ENCODE measurements at regions of chr3 and their contacts with region 1.

Region 1: DNA sequence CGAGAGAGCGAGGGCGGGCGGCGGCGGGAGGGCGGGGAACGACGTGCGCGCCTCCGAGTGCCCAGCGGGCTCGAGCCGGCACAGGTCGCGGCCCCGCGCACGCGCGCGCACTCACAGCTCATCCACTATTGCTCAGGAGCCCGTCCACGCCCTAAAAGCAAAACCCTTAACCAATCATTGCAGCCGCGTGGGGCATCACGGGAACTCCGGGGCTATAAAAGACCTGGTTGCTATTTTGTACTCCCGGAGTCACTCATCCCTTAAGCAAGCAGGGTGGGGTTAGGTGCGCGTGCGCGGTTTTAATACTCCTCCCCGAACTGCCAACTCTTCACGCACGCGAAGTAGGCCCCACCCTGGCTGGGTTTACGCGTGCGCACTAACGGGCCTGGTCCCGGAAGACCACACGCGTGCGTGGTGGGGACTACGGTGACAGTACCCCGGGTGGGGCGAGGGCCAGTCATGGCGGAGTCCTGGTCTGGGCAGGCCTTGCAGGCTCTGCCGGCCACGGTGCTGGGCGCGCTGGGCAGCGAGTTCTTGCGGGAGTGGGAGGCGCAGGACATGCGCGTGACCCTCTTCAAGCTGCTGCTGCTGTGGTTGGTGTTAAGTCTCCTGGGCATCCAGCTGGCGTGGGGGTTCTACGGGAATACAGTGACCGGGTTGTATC is at the starts of genes RHOA and TCTA:
- DNase-seq: peak; percentile 99
- ATAC-seq: peak; percentile 87
- H3K4me3 Mint-ChIP-seq: peak within 1 kb of the TSS; percentile 89
- H3K27ac Mint-ChIP-seq: peak within 1 kb of the TSS; percentile 94
- H3K4me1 Mint-ChIP-seq: peaks cover 64% of the 10 kb centered on the region
- H3K27me3 Mint-ChIP-seq: no peaks in the 10 kb centered on the region
- CTCF ChIP-seq: no peak
- total RNA-seq, gene RHOA: 432 to 437 TPM
- total RNA-seq, gene TCTA: 10.4 to 12.4 TPM

Region 2: GRCh38 chr3:49422379-49423248 is 10.5 kb after region 1 on chr3 and contains the start of gene AMT:
- CTCF ChIA-PET with region 1: interaction called, 6 read pairs
- POLR2A ChIA-PET with region 1: interaction called, 18 read pairs
- intact Hi-C with region 1: no loop called
- DNase-seq: no peak
- ATAC-seq: no peak
- H3K4me3 Mint-ChIP-seq: peak within 1 kb of the TSS; percentile 27
- H3K27ac Mint-ChIP-seq: no peak within 1 kb of the TSS
- H3K4me1 Mint-ChIP-seq: peaks cover 37% of the 10 kb centered on the region
- H3K27me3 Mint-ChIP-seq: no peaks in the 10 kb centered on the region
- CTCF ChIP-seq: no peak
- total RNA-seq, gene AMT: 2.5 to 4.4 TPM

Region 3: GRCh38 chr3:49445381-49445780 is 33.3 kb after region 1 on chr3:
- CTCF ChIA-PET with region 1: interaction called, 23 read pairs
- POLR2A ChIA-PET with region 1: interaction called, 3 read pairs
- intact Hi-C with region 1: no loop called
- DNase-seq: no peak
- ATAC-seq: no peak
- H3K4me3 Mint-ChIP-seq: no peak overlapping the region
- H3K27ac Mint-ChIP-seq: no peak overlapping the region
- H3K4me1 Mint-ChIP-seq: peaks cover 11% of the 10 kb centered on the region
- H3K27me3 Mint-ChIP-seq: no peaks in the 10 kb centered on the region
- CTCF ChIP-seq: no peak

Region 4: GRCh38 chr3:49454458-49454857 is 42.4 kb after region 1 on chr3:
- CTCF ChIA-PET with region 1: interaction called, 23 read pairs
- POLR2A ChIA-PET with region 1: interaction called, 3 read pairs
- intact Hi-C with region 1: no loop called
- DNase-seq: peak; percentile 36
- ATAC-seq: peak; percentile 67
- H3K4me3 Mint-ChIP-seq: no peak overlapping the region
- H3K27ac Mint-ChIP-seq: no peak overlapping the region
- H3K4me1 Mint-ChIP-seq: no peaks in the 10 kb centered on the region
- H3K27me3 Mint-ChIP-seq: no peaks in the 10 kb centered on the region
- CTCF ChIP-seq: peak; percentile 33